ENCODE measurements at regions of chr1 and their contacts with region 1.

Region 1: DNA sequence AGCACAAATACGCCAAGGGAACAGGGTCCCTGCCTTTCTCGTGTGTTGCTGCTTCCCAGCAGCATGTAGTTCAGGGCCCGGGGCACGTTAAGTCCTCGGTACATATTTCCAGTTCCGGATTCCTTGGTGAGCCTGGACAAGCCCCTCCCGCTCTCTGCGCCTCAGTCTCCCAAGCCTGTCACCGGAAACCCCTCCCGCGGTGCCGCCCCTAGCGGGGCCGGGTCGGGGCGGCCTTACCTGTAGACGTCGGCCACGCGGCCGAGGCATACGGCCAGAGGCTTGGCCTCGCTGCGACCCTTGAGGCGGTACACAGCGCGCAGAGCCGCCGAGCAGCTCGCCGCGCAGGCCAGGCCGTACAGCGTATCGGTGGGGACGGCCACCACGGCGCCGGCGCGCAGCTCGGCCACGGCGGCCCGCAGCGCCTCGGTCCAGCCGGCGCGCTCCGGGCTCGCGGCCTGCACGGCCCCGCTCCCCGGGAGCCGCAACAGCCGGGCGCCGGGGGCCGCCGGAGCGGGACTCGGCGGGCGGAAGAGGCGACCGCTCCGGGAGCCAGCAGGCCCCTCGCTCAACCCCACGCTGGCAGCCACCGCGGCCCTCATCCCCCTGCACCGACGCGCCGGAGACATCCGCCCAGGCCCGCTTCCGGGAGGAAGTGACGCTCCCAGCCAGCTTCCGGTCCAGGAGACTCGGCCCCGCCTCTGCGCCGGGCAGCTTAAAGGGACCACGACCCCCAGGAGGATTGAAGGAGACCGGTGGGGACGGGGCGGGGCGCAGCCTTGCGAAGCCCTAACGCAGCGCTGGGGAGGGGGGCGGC is at the starts of genes C1orf122 and YRDC:
- DNase-seq: peak; percentile 98
- total RNA-seq, gene C1orf122: 52.1 TPM
- total RNA-seq, gene YRDC: 6.3 TPM

Region 2: GRCh38 chr1:37595440-37596319 is 212.1 kb before region 1 on chr1 and contains the start of gene GNL2:
- intact Hi-C with region 1: loop called (anchors 10 kb)
- DNase-seq: peak; percentile 98
- total RNA-seq, gene GNL2: 24.1 TPM

Region 3: GRCh38 chr1:37692078-37692833 is 115.5 kb before region 1 on chr1 and contains the start of gene CDCA8:
- intact Hi-C with region 1: loop called (anchors 5 kb)
- DNase-seq: peak; percentile 99
- total RNA-seq, gene CDCA8: 0.27 TPM

Region 4: DNA sequence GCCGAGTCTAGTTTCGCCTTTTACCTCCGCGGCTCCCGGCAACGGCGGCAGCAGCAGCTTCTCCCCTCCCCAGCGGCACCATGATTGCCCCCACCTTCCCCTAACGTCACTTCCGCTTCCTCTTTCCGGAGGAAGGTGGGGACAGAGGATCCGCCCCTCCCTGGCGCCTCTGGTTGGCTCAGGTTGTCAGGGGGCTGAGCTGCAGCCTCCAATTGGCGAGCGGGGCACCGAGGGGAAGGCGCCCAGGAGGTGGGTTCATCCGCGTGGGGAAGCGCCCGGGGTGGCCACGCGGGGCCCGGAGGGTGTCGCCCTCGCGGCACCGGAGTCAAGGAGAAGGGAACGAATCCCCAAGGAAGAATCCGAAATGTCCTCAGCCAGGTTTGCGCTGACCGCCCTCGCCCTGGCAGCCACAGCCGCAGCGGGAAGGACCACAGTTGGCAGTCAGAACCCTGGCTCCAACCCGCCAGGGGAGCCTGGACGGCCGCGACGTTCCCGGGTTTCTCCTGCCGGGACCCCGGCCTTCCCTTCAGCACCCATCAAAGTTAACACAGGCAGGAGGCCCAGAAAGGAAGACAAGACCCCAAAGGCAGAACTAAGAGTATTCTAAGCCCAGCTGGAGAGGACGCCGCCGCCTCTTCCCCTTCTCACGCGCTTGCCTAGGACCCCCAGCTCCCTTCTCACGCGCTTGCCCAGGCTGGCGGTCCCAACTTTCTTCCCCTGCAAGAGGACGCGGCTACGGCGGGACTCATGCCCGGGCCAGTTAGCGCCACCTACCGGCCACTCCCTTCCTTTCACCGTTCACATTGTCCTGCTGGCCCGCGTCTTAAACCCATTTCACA is 52.0 kb after region 1 on chr1 and contains the start of gene MTF1:
- intact Hi-C with region 1: loop called (anchors 5 kb)
- DNase-seq: peak; percentile 99
- total RNA-seq, gene MTF1: 16.0 TPM

Region 5: GRCh38 chr1:37946703-37947360 is 139.1 kb after region 1 on chr1 and contains the start of gene INPP5B:
- intact Hi-C with region 1: loop called (anchors 5 kb)
- DNase-seq: peak; percentile 95
- total RNA-seq, gene INPP5B: 13.7 TPM

Region 6: DNA sequence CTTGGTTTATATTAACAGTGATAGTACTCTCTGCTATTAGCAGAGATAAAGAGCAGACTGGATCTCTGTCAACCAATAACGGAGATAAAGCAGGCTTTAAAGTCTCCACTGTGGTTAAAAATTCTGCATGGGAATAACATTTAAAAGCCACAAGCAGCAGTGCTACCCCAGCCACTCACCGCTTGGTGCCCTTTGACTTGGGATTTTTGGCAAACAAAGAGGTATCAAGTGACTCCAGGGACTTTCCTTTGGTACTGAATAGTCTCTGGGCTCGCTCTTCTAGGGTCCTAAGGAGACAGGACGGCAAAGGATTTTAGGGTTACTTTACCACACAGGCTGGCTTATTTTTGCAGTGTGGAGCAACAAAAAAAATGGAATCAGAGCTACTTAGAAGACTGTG is 170.8 kb after region 1 on chr1:
- intact Hi-C with region 1: loop called (anchors 10 kb)
- DNase-seq: no peak

Region 7: DNA sequence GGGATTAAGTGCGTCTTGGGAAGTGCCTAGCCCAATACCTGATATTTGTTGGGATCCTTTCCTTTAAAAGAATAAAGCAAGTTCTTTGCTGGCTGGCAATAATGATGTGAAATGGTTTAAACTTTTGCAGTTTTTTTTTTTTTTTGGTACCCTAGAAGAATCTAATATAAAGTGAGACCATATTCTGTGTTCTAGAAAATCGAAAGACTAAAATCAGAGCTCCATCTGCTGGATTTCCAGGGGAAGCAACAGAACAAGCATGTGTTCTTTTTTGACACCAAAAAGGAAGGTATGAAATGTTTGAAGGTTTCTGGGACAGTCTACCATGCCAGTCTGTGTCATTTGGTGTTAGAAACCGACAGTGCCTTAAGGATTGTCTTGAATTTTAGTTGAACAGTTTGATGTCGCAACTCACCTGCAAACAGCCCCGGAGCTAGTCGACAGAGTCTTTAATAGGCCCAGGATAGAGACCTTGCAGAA is 211.1 kb after region 1 on chr1:
- intact Hi-C with region 1: no loop called
- DNase-seq: no peak

Measured in cardiac septum (tissue), 1 donor.